ENCODE measurements at regions of chr22 and their contacts with region 1.

Region 1: GRCh38 chr22:21629262-21630149 is at the start of gene YDJC:
- DNase-seq: peak; percentile 97
- ATAC-seq: peak; percentile 97
- total RNA-seq, gene YDJC: 5.4 TPM

Region 2: GRCh38 chr22:21567456-21568346 is 61.8 kb before region 1 on chr22 and contains the start of gene UBE2L3:
- intact Hi-C with region 1: no loop called
- DNase-seq: peak; percentile 91
- ATAC-seq: peak; percentile 95
- total RNA-seq, gene UBE2L3: 51.0 TPM

Region 3: DNA sequence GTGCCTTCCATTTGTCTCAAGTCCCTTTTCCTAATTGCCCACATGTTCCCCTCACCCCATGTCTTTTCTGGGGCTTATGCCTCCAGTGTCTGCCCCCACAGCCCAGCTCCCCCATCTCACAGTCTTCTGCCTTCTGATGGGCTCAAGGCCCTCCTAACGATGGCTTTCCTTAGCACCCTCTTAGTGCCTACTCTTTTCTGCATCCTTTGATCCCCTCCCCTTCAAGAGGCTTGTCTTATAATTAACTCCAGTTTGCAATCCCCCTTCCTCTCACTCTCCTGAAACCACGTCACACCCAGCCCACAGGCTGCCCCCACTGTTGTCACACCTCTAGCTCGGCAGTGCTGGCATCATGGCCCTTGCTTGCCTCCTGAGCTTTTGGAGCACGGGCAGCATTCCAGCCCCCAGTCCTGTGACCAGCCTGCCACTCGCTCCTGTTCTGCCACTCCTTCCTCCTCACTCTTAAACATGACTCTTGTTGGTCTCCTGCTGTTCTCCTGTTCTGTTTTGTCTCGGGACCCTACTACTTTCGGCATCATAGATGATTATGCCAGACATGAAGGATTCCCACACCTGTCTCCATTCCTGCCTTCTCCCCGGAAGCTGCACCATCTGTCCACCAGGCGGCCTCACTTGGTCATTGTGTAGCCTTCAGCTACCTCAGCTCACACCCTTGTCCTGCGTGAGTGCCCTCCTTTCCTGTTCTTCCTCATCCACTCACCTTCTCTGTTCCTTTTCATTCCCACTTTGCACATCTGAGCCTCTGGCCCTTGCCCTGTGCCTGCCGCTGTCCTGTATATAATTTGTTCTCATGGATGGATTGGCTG is 35.9 kb before region 1 on chr22:
- intact Hi-C with region 1: loop called (anchors 5 kb)
- DNase-seq: peak; percentile 77
- ATAC-seq: peak; percentile 67

Region 4: DNA sequence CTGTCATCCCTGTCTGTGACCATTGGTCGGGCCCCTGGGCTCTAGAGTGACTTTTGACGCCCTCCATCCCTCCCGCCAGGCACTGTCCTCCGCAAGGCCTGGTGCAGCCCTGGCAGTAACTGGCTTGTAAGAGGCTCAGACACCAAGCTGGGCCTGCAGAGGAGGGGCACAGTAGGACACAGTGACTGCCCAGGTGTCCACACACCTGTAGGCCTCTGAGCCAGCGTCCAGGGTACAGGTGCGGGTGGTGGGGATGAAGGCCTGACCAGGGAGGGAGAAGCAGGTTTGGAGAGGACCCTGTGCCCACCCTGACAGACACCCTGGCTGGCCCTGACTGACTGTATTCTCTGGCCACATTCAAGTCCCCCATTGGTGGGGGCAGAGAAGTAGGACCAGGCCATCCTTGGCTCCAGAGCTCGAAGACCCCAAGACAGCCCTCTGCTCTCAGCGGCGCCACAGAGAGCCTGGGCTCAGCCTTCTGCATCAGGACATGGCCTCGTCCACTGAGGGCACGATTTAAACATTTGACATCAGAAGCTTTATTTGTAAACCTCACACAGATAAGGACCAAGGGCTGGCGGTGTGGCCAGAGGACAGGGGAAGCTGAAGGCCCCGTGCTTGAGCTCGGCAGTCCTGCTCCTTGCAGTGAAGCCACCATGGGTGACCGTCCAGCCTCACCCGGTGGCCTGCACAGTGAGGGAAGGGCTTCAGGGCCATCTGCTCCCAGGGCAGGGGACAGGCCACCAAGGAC is 67.7 kb after region 1 on chr22:
- intact Hi-C with region 1: no loop called
- DNase-seq: no peak
- ATAC-seq: no peak

Region 5: GRCh38 chr22:21707677-21708076 is 78.2 kb after region 1 on chr22:
- intact Hi-C with region 1: no loop called
- DNase-seq: no peak
- ATAC-seq: peak; percentile 27

Region 6: DNA sequence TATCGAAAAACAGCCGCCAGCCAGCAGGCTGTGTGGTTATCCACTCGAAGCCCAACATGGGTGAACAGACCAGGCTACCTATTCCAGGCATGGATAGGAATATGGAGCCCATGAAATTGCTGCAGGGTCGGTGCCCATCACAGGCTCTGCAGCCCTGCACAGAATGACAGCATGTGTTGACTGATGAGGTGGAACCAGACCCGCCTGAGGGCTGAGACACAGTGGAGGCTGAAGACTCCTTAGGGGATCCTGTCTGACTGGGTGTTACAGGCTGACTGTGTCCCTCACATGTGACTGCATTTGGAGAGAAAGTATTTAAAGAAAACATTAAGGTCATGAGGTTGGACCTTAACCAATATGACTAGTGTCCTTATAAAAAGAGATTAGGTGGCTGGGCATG is 112.3 kb after region 1 on chr22:
- intact Hi-C with region 1: no loop called
- DNase-seq: no peak
- ATAC-seq: no peak

Measured in Right ventricle myocardium inferior (tissue), 1 donor.